Natural killer cell (primary cell): ENCODE measurements at regions of chr3 and their contacts with region 1.

Region 1: DNA sequence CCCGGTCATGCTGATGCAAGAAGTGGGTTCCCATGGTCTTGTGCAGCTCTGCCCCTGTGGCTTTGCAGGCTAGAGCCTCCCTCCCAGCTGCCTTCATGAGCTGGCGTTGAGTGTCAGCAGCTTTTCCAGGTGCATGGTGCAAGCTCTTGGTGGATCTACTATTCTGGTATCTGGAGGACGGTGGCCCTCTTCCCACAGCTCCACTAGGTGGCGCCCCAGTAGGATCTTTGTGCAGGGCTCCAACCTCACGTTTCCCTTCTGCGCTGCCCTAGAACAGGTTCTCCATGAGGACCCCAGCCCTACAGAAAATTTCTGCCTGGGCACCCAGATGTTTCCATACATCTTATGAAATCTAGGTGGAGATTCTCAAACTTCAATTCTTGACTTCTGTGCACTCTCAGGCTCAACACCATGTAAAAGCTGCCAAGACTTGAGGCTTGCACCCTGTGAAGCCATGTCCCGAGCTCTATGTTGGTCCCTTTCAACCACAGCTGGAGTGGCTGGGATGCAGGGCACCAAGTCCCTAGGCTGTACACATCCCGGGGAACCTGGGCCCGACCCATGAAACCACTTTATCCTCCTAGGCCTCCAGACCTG is 238.4 kb upstream of the MDFIC2 start:
- DNase-seq: peak; percentile 47 to 83
- ATAC-seq: peak; percentile 44 to 80 (median 67)
- H3K4me3 ChIP-seq: no peak overlapping the region
- H3K4me3 Mint-ChIP-seq: no peak overlapping the region
- H3K27ac ChIP-seq: no peak overlapping the region
- H3K27ac Mint-ChIP-seq: no peak overlapping the region
- H3K4me1 ChIP-seq: no peaks in the 10 kb centered on the region
- H3K4me1 Mint-ChIP-seq: no peaks in the 10 kb centered on the region
- H3K27me3 ChIP-seq: no peaks in the 10 kb centered on the region
- H3K27me3 Mint-ChIP-seq: no peaks in the 10 kb centered on the region
- CTCF ChIP-seq: peak; percentile 58

Region 2: DNA sequence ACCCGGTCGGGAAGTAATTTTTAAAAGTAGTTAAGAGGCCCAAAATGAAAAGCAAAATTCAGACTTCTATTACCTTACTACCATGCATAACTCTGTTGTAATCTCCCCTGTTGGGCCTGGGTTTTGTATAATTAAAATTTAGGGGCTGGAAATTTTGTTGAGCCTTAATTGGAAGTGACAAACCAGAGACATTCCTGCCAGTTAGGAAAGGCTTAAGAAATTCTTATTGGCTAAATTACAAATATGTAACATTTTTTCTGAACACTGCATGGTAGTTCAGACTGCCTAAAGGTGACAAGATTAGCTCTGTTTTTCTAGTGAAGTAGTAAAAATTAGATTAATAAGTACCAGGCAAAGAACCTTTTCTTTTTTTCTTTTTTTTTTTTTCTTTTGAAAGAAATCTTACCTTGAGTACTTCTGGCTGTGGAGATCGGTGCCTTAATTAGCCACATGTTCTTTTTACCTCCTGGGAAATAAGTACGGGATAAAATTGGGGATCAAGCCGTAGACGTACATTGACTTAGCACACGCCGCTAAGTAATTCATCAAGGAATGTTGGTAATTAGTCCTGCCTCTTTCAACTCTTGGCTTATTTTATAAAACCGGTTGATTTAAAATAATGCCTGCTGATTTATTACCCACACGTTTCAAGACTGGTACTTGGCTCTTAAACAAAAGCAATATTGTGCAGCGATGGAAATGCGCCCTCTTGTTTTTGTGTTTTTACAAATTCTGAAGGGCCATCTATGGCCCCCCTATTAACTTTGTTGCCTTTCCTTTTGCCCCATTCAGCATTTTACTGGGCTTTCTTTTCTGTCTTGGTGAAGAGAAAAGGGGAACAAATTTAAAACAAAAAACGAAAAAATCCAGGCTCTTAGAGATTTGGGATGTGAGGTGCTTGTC is 662.5 kb before region 1 on chr3:
- intact Hi-C with region 1: no loop called
- DNase-seq: no peak
- ATAC-seq: no peak
- H3K4me3 ChIP-seq: no peak overlapping the region
- H3K4me3 Mint-ChIP-seq: no peak overlapping the region
- H3K27ac ChIP-seq: no peak overlapping the region
- H3K27ac Mint-ChIP-seq: no peak overlapping the region
- H3K4me1 ChIP-seq: no peaks in the 10 kb centered on the region
- H3K4me1 Mint-ChIP-seq: no peaks in the 10 kb centered on the region
- H3K27me3 ChIP-seq: no peaks in the 10 kb centered on the region
- H3K27me3 Mint-ChIP-seq: no peaks in the 10 kb centered on the region
- CTCF ChIP-seq: no peak

Region 3: DNA sequence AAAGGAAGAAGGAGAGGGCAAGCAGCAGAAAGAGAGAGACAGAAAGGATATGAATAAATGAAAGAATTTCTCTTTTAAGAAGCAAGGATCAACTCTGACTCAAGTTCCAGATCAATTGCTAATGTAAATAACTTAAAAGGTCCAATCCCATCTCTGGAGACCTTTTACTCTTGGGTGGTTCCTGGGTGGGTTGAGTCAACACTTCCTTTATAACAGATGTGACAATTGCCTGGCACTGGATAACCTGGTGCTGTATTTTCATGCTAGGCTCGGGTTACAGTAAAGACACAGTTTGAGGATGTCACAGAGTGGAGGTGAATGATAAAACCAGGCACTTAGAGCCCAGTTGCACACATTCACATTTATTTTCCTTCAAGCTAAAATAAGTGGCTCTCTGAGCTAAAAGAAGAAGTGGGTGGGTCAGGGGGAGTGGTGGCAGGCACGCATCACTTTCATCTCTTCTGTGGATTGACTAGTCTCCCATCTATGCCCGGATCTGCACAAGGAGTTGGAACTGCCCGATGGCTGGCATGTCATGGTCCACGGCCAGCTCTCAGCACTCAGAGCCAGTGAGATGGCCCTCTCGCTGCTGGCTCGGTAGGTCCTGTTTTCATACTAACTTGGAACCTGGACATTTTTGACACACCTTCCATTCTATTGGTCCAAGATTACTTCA is 566.9 kb after region 1 on chr3:
- intact Hi-C with region 1: no loop called
- DNase-seq: no peak
- ATAC-seq: peak in 1 of 3 donors; percentile 49
- H3K4me3 ChIP-seq: no peak overlapping the region
- H3K4me3 Mint-ChIP-seq: peak overlapping the region; percentile 47
- H3K27ac ChIP-seq: no peak overlapping the region
- H3K27ac Mint-ChIP-seq: peak overlapping the region; percentile 55 to 57
- H3K4me1 ChIP-seq: no peaks in the 10 kb centered on the region
- H3K4me1 Mint-ChIP-seq: peaks cover 85 to 88% of the 10 kb centered on the region in 2 donors
- H3K27me3 ChIP-seq: no peaks in the 10 kb centered on the region
- H3K27me3 Mint-ChIP-seq: no peaks in the 10 kb centered on the region
- CTCF ChIP-seq: no peak

Region 4: GRCh38 chr3:71652781-71653413 is 1102.1 kb after region 1 on chr3:
- intact Hi-C with region 1: loop called (anchors 5 kb)
- DNase-seq: peak in 1 of 2 donors; percentile 56
- ATAC-seq: no peak
- H3K4me3 ChIP-seq: no peak overlapping the region
- H3K4me3 Mint-ChIP-seq: no peak overlapping the region
- H3K27ac ChIP-seq: no peak overlapping the region
- H3K27ac Mint-ChIP-seq: no peak overlapping the region
- H3K4me1 ChIP-seq: no peaks in the 10 kb centered on the region
- H3K4me1 Mint-ChIP-seq: peaks cover 5 to 10% of the 10 kb centered on the region in 2 donors
- H3K27me3 ChIP-seq: no peaks in the 10 kb centered on the region
- H3K27me3 Mint-ChIP-seq: no peaks in the 10 kb centered on the region
- CTCF ChIP-seq: peak; percentile 11